GM12878 (cell line): ENCODE measurements at regions of chr10 and their contacts with region 1.

Region 1: DNA sequence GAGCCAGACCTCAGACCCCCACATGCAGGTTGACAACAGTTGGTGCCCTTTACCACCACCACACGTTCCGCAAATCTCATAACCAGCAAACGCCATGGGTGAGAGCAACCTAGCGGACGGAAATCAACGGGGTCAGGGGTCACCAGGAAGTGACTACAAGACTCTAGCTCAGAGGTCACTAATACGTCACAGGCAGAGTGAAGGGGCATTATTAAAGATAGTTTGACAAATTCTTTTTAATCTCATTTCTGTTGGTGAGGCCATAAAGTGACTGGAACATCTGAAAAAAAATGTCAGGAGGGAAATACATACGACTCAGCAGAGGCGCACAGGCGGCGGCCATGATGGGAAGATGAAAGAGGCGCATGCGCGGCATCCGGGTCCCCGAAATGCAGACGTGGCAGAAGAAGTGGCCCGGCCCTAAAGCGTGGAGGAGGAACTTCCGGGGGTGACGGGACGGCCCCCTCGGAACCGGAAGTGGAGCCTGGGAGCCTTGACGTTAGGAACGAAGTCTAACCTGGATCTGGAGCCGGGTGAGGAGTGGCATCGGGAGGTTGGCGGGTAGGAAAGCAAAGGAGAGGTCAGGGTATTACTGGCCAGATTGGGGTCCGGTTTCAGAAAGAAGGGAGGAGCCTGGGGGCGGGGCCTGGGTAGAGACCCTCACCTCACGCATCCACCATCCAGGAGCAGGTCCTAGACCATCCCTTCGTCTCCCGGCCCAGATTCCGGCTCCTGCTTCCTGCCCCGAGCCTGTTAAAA is at the start of gene SEC24C:
- DNase-seq: peak; percentile 88
- ATAC-seq: peak; percentile 92
- H3K4me3 ChIP-seq: peak within 1 kb of the TSS; percentile 95
- H3K27ac ChIP-seq: peak within 1 kb of the TSS; percentile 97
- H3K4me1 ChIP-seq: peaks cover 11% of the 10 kb centered on the region
- H3K27me3 ChIP-seq: no peaks in the 10 kb centered on the region
- CTCF ChIP-seq: no peak
- EP300 ChIP-seq: no peak
- POLR2A ChIP-seq: peak; percentile 92
- RAD21 ChIP-seq: no peak
- polyA plus RNA-seq, gene SEC24C: 12.7 to 18.8 TPM

Region 2: GRCh38 chr10:73717556-73717955 is 26.5 kb before region 1 on chr10:
- CTCF ChIA-PET with region 1: interaction called, 4 read pairs
- POLR2A ChIA-PET with region 1: interaction called, 15 read pairs
- RAD21 ChIA-PET with region 1: interaction called, 5 read pairs
- SMC1A ChIA-PET with region 1: interaction called, 3 read pairs
- in situ Hi-C with region 1: no loop called
- intact Hi-C with region 1: no loop called
- DNase-seq: peak; percentile 42
- ATAC-seq: peak; percentile 83
- H3K4me3 ChIP-seq: no peak overlapping the region
- H3K27ac ChIP-seq: peak overlapping the region; percentile 74
- H3K4me1 ChIP-seq: peaks cover 9% of the 10 kb centered on the region
- H3K27me3 ChIP-seq: no peaks in the 10 kb centered on the region
- CTCF ChIP-seq: no peak
- EP300 ChIP-seq: peak in 1 of 2 experiments; percentile 41; a peak in 1 of 4 replicates
- POLR2A ChIP-seq: no peak
- RAD21 ChIP-seq: no peak

Region 3: DNA sequence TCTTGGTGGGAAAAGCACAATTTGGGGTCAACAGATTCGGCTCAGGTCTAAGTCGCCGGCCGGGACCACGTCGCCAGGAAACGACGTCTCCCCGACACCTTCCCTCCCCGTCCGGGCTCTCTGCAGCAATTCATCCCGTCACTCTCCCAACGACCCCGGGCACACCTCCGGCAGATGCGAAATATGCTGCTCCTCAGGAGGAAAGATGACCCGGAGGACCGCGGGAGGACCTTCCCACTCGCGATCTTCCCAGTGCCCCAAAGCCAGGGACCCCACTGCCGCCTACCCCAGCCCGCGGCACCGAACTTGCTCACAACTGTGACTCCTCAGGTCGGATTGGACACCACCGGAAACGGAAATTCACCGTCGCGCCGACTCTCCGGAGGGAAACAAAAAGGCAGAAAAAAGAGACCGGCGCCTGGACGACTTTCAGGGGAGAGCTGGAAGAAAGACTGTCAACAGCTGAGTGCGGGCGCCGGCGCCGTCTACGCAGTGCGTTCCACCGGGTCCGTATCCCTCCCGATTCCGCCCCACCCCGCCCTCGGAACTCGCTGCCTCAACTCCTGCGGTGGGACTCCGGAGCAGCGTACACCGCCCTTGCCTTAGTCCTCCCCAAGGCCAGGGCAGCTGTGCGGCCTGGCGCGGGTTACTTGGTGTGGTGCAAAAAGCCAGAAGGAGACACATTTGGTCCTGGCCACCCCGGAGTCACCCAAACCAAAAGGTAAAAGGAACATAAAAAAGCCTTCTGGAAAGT is 13.8 kb before region 1 on chr10:
- CTCF ChIA-PET with region 1: interaction called, 3 read pairs
- POLR2A ChIA-PET with region 1: interaction called, 38 read pairs
- RAD21 ChIA-PET with region 1: interaction called, 25 read pairs
- SMC1A ChIA-PET with region 1: interaction called, 35 read pairs
- in situ Hi-C with region 1: no loop called
- intact Hi-C with region 1: loop called (anchors 1 kb)
- DNase-seq: peak; percentile 68
- ATAC-seq: peak; percentile 95
- H3K4me3 ChIP-seq: peak overlapping the region; percentile 80
- H3K27ac ChIP-seq: peak overlapping the region; percentile 67
- H3K4me1 ChIP-seq: no peaks in the 10 kb centered on the region; the same call in 1 of the 2 replicates
- H3K27me3 ChIP-seq: no peaks in the 10 kb centered on the region
- CTCF ChIP-seq: no peak
- EP300 ChIP-seq: no peak
- POLR2A ChIP-seq: peak; percentile 92
- RAD21 ChIP-seq: no peak

Region 4: GRCh38 chr10:73759512-73760115 is 15.5 kb after region 1 on chr10:
- CTCF ChIA-PET with region 1: interaction called, 20 read pairs
- POLR2A ChIA-PET with region 1: interaction called, 16 read pairs
- RAD21 ChIA-PET with region 1: interaction called, 52 read pairs
- SMC1A ChIA-PET with region 1: interaction called, 24 read pairs
- in situ Hi-C with region 1: no loop called
- intact Hi-C with region 1: loop called (anchors 2 kb)
- DNase-seq: no peak
- ATAC-seq: peak; percentile 76
- H3K4me3 ChIP-seq: no peak overlapping the region
- H3K27ac ChIP-seq: peak overlapping the region; percentile 84
- H3K4me1 ChIP-seq: peaks cover 55% of the 10 kb centered on the region
- H3K27me3 ChIP-seq: no peaks in the 10 kb centered on the region
- CTCF ChIP-seq: no peak
- EP300 ChIP-seq: no peak
- POLR2A ChIP-seq: no peak
- RAD21 ChIP-seq: no peak

Region 5: DNA sequence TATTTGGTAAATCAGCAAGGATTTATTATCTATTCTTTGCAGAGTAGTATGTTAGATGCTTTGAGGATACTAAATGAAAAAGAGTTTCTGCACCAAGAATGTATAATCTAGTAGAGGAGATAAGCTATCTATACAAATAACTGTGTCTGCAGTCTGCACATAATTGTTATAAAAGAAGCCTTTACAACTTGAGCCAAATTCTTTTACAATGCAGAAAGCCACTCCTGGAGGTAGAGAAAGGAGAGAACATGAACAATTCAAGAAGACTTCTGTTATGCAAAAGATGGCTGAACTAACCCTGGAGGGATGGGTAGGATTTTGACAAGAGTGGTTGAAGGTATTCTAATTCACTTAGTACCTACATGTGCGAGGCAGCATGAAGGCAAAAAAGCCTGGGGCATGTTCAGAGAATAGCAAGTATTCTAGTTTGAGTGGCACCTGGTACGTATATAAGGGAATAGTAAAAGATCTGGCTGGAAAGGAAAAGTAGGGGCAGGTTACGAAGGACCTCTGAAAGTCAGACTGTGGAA is 831.2 kb after region 1 on chr10:
- CTCF ChIA-PET with region 1: no interaction called
- POLR2A ChIA-PET with region 1: no interaction called
- RAD21 ChIA-PET with region 1: no interaction called
- SMC1A ChIA-PET with region 1: no interaction called
- in situ Hi-C with region 1: no loop called
- intact Hi-C with region 1: no loop called
- DNase-seq: no peak
- ATAC-seq: no peak
- H3K4me3 ChIP-seq: no peak overlapping the region
- H3K27ac ChIP-seq: no peak overlapping the region
- H3K4me1 ChIP-seq: no peaks in the 10 kb centered on the region
- H3K27me3 ChIP-seq: no peaks in the 10 kb centered on the region
- CTCF ChIP-seq: no peak
- EP300 ChIP-seq: no peak
- POLR2A ChIP-seq: no peak
- RAD21 ChIP-seq: no peak